ENCODE measurements at regions of chr7 and their contacts with region 1.

Region 1: DNA sequence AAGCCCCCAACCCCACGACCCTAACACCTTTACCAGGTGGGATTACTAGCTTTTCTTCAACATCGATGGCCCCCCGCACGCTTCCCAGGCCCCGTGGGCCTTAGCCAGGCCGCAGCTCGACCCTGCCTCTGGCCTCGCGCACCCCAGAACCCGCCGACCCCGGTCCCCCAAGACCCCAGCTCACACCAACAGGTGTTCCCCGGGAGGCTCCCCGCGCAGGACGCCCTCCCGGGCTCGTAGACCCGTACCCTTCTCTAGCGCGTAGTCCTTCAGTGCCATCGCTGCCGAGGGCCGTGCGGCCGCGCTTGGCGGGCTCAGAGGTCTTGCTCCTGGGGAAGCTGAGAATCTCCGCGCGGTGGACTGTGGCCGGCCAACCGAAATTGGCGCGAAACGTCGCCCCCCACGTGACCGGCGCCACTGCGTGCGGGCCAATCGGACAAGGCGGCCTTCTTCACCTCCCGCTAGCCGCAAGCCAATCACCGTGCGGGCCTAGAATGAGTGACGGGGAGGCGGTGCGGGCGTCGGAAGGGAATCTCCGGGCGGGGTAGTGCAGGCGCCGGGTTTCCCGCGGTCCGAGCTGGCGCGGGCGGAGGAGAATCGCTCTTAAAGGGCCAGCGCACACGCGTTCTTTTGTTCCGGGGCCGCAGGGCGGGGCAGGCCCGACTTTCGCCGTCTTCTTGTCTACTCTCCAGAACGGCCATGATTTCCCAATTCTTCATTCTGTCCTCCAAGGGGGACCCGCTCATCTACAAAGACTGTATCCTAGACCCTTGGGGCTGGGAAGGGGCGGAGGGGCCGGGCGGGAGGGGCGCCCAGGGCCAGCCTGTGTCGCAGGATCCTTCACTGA is at the starts of genes AP4M1 and MCM7:
- DNase-seq: peak; percentile 99
- H3K4me3 Mint-ChIP-seq: peak within 1 kb of the TSS; percentile 94
- H3K27ac Mint-ChIP-seq: peak within 1 kb of the TSS; percentile 94
- H3K4me1 Mint-ChIP-seq: peaks cover 35% of the 10 kb centered on the region
- H3K27me3 Mint-ChIP-seq: no peaks in the 10 kb centered on the region
- total RNA-seq, gene AP4M1: 13.5 and 16.4 TPM in 2 replicates
- total RNA-seq, gene MCM7: 464 and 469 TPM in 2 replicates

Region 2: GRCh38 chr7:100088621-100089457 is 12.4 kb before region 1 on chr7 and contains the start of gene COPS6:
- intact Hi-C with region 1: loop called (anchors 1 kb)
- DNase-seq: peak; percentile 97
- H3K4me3 Mint-ChIP-seq: peak within 1 kb of the TSS; percentile 86
- H3K27ac Mint-ChIP-seq: peak within 1 kb of the TSS; percentile 94
- H3K4me1 Mint-ChIP-seq: peaks cover 29% of the 10 kb centered on the region
- H3K27me3 Mint-ChIP-seq: peaks cover 7% of the 10 kb centered on the region
- total RNA-seq, gene COPS6: 109 and 114 TPM in 2 replicates

Region 3: GRCh38 chr7:100119062-100119700 is 17.9 kb after region 1 on chr7 and contains the starts of genes CNPY4 and TAF6:
- intact Hi-C with region 1: loop called (anchors 1 kb)
- DNase-seq: peak; percentile 98
- H3K4me3 Mint-ChIP-seq: peak within 1 kb of the TSS; percentile 84
- H3K27ac Mint-ChIP-seq: peak within 1 kb of the TSS; percentile 96
- H3K4me1 Mint-ChIP-seq: peaks cover 16% of the 10 kb centered on the region
- H3K27me3 Mint-ChIP-seq: no peaks in the 10 kb centered on the region
- total RNA-seq, gene CNPY4: 16.2 and 17.0 TPM in 2 replicates
- total RNA-seq, gene TAF6: 68.4 and 71.5 TPM in 2 replicates

Region 4: GRCh38 chr7:100148559-100149350 is 47.5 kb after region 1 on chr7 and contains the start of gene LAMTOR4:
- intact Hi-C with region 1: loop called (anchors 2 kb)
- DNase-seq: peak; percentile 100
- H3K4me3 Mint-ChIP-seq: peak within 1 kb of the TSS; percentile 99
- H3K27ac Mint-ChIP-seq: peak within 1 kb of the TSS; percentile 99
- H3K4me1 Mint-ChIP-seq: peaks cover 33% of the 10 kb centered on the region
- H3K27me3 Mint-ChIP-seq: no peaks in the 10 kb centered on the region
- total RNA-seq, gene LAMTOR4: 123 and 126 TPM in 2 replicates

Region 5: GRCh38 chr7:100158229-100159098 is 57.2 kb after region 1 on chr7 and contains the start of gene TRAPPC14:
- intact Hi-C with region 1: loop called (anchors 2 kb)
- DNase-seq: peak; percentile 98
- H3K4me3 Mint-ChIP-seq: peak within 1 kb of the TSS; percentile 85
- H3K27ac Mint-ChIP-seq: peak within 1 kb of the TSS; percentile 78
- H3K4me1 Mint-ChIP-seq: peaks cover 35% of the 10 kb centered on the region
- H3K27me3 Mint-ChIP-seq: no peaks in the 10 kb centered on the region
- total RNA-seq, gene TRAPPC14: 31.7 and 39.2 TPM in 2 replicates